CD4-positive, alpha-beta T cell (primary cell): ENCODE measurements at regions of chr19 and their contacts with region 1.

Region 1: GRCh38 chr19:40633207-40633606 is 32.0 kb downstream of the LTBP4 start:
- DNase-seq: no peak
- ATAC-seq: no peak
- H3K4me3 ChIP-seq: no peak overlapping the region
- H3K4me3 Mint-ChIP-seq: no peak overlapping the region
- H3K27ac ChIP-seq: no peak overlapping the region
- H3K27ac Mint-ChIP-seq: no peak overlapping the region
- H3K4me1 ChIP-seq: peaks cover 9% of the 10 kb centered on the region
- H3K4me1 Mint-ChIP-seq: peaks cover 15% of the 10 kb centered on the region
- H3K27me3 ChIP-seq: no peaks in the 10 kb centered on the region
- H3K27me3 Mint-ChIP-seq: no peaks in the 10 kb centered on the region
- CTCF ChIP-seq: no peak

Region 2: DNA sequence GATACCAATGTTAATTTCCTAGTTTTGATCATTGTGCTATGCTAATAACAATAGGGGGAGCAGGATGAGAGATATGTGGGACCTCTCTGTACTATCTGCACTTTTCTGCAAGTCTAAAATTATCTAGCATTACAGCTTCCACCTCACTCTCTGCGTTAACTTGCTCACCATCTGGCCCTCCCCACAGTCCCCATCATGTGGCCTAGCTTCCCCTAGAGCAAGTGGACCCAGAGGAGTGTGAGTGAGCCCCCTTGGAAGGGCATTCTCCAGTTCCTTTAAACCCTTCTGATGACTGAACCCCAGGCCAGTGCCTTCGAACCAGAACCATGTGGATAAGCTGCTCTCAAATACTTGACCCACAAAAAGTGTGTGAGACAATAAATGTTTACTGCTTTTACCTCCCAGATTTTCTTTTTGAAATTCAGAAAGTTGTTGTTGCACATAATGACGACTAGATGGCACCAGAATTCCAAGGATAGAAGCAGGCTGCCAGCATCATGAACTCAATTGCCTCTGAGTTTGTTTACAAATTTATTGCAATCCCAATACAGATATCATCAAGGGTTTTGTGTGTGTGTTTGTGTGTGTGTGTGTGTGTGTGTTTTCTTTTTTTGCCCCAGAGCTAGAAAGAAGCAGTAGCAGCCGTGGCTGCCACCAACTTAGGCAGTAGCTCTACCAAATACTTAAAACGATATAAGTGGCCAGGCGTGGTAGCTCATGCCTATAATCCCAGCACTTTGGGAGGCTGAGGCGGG is 493.5 kb before region 1 on chr19:
- CTCF ChIA-PET with region 1: interaction called, 4 read pairs
- POLR2A ChIA-PET with region 1: no interaction called
- intact Hi-C with region 1: loop called (anchors 2 to 10 kb)
- DNase-seq: peak in 5 of 14 experiments; percentile 5 to 79 (median 65)
- ATAC-seq: no peak
- H3K4me3 ChIP-seq: no peak overlapping the region
- H3K4me3 Mint-ChIP-seq: no peak overlapping the region
- H3K27ac ChIP-seq: no peak overlapping the region
- H3K27ac Mint-ChIP-seq: no peak overlapping the region
- H3K4me1 ChIP-seq: peaks cover 18% of the 10 kb centered on the region
- H3K4me1 Mint-ChIP-seq: peaks cover 26% of the 10 kb centered on the region
- H3K27me3 ChIP-seq: no peaks in the 10 kb centered on the region
- H3K27me3 Mint-ChIP-seq: peaks cover 15% of the 10 kb centered on the region
- CTCF ChIP-seq: peak; percentile 85

Region 3: GRCh38 chr19:40465557-40466150 is 167.6 kb before region 1 on chr19 and contains the start of gene BLVRB:
- CTCF ChIA-PET with region 1: interaction called, 11 read pairs
- POLR2A ChIA-PET with region 1: interaction called, 3 read pairs
- intact Hi-C with region 1: no loop called
- DNase-seq: peak; percentile 98 to 100 (median 100)
- ATAC-seq: peak; percentile 81
- H3K4me3 ChIP-seq: peak within 1 kb of the TSS; percentile 81
- H3K4me3 Mint-ChIP-seq: peak within 1 kb of the TSS; percentile 93
- H3K27ac ChIP-seq: peak within 1 kb of the TSS; percentile 13 to 62
- H3K27ac Mint-ChIP-seq: peak within 1 kb of the TSS; percentile 87
- H3K4me1 ChIP-seq: peaks cover 35% of the 10 kb centered on the region
- H3K4me1 Mint-ChIP-seq: peaks cover 30% of the 10 kb centered on the region
- H3K27me3 ChIP-seq: peaks cover 0 to 16% of the 10 kb centered on the region in 2 experiments
- H3K27me3 Mint-ChIP-seq: peaks cover 25% of the 10 kb centered on the region
- CTCF ChIP-seq: no peak
- total RNA-seq, gene BLVRB: 4.3 to 5.2 TPM

Region 4: DNA sequence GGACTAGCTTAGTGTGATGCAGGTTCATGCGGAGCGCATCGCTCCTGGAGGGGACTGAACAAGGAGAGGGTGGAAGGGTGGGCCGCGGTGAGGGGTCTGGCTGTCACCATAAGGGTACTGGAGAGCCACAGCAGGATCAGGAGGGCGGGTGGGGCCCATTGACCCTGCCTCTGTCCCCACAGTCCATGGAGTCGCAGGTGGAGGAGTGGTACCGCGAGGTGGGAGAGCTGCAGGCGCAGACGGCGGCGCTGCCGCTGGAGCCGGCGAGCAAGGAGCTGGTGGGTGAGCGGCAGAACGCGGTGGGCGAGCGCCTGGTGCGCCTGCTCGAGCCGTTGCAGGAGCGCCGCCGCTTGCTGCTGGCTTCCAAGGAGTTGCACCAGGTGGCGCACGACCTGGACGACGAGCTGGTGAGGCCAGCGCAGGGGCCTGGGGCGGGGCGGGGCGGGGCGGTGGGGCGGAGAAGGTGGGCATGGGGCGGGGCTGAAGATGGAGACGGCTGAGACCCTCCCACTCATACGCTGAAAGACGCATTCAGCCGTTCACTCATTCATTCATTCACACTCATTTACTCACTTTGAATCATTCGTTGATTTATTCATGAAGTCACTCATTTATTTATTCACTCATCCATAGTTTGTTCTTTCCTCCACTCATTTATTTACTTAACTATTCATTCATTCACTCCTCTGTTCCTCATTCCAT is 84.0 kb before region 1 on chr19:
- CTCF ChIA-PET with region 1: interaction called, 19 read pairs
- POLR2A ChIA-PET with region 1: no interaction called
- intact Hi-C with region 1: loop called (anchors 1 kb)
- DNase-seq: peak; percentile 56 to 85 (median 66)
- ATAC-seq: peak; percentile 92
- H3K4me3 ChIP-seq: no peak overlapping the region
- H3K4me3 Mint-ChIP-seq: no peak overlapping the region
- H3K27ac ChIP-seq: no peak overlapping the region
- H3K27ac Mint-ChIP-seq: no peak overlapping the region
- H3K4me1 ChIP-seq: peaks cover 7% of the 10 kb centered on the region
- H3K4me1 Mint-ChIP-seq: peaks cover 11% of the 10 kb centered on the region
- H3K27me3 ChIP-seq: peaks cover 28 to 45% of the 10 kb centered on the region in 2 experiments
- H3K27me3 Mint-ChIP-seq: peaks cover 60% of the 10 kb centered on the region
- CTCF ChIP-seq: peak; percentile 66

Region 5: GRCh38 chr19:40598121-40598917 is 34.9 kb before region 1 on chr19:
- CTCF ChIA-PET with region 1: interaction called, 37 read pairs
- POLR2A ChIA-PET with region 1: no interaction called
- intact Hi-C with region 1: no loop called
- DNase-seq: peak; percentile 69 to 90 (median 81)
- ATAC-seq: peak; percentile 61
- H3K4me3 ChIP-seq: no peak overlapping the region
- H3K4me3 Mint-ChIP-seq: peak overlapping the region; percentile 48
- H3K27ac ChIP-seq: no peak overlapping the region
- H3K27ac Mint-ChIP-seq: no peak overlapping the region
- H3K4me1 ChIP-seq: peaks cover 77% of the 10 kb centered on the region
- H3K4me1 Mint-ChIP-seq: peaks cover 60% of the 10 kb centered on the region
- H3K27me3 ChIP-seq: peaks cover 39 to 55% of the 10 kb centered on the region in 2 experiments
- H3K27me3 Mint-ChIP-seq: peaks cover 61% of the 10 kb centered on the region
- CTCF ChIP-seq: peak; percentile 99

Region 6: GRCh38 chr19:40646564-40647254 is 13.5 kb after region 1 on chr19:
- CTCF ChIA-PET with region 1: interaction called, 12 read pairs
- POLR2A ChIA-PET with region 1: no interaction called
- intact Hi-C with region 1: no loop called
- DNase-seq: no peak
- ATAC-seq: no peak
- H3K4me3 ChIP-seq: no peak overlapping the region
- H3K4me3 Mint-ChIP-seq: no peak overlapping the region
- H3K27ac ChIP-seq: no peak overlapping the region
- H3K27ac Mint-ChIP-seq: no peak overlapping the region
- H3K4me1 ChIP-seq: no peaks in the 10 kb centered on the region
- H3K4me1 Mint-ChIP-seq: no peaks in the 10 kb centered on the region
- H3K27me3 ChIP-seq: peaks cover 0 to 3% of the 10 kb centered on the region in 2 experiments
- H3K27me3 Mint-ChIP-seq: peaks cover 8% of the 10 kb centered on the region
- CTCF ChIP-seq: no peak